CD4-positive, alpha-beta T cell (primary cell): ENCODE measurements at regions of chrX and their contacts with region 1.

Region 1: DNA sequence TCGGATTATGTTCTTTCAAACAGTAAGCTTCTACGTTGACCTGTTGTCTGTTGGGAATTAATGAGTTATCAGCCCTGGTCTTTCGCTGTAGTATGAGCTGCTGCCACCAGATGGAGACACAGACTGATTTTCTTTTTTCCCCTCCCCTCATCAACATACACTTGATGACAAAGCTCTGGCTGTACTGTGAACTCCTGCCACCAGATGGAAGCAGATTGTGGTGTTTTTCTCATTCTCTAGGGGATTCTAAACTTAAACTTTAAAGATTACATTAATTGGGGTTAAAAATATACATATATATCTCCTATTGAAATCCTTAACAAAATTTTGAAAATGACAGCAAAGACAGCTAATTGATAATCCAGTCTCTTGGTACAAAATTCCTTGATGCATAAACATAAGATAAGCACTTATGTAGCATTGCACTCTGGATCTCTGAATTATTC is 44.8 kb downstream of the SMS start:
- DNase-seq: peak; percentile 15 to 83 (median 55)
- ATAC-seq: peak; percentile 99
- H3K4me3 ChIP-seq: no peak overlapping the region
- H3K4me3 Mint-ChIP-seq: no peak overlapping the region
- H3K27ac ChIP-seq: no peak overlapping the region
- H3K27ac Mint-ChIP-seq: no peak overlapping the region
- H3K4me1 ChIP-seq: no peaks in the 10 kb centered on the region
- H3K4me1 Mint-ChIP-seq: peaks cover 5% of the 10 kb centered on the region
- H3K27me3 ChIP-seq: no peaks in the 10 kb centered on the region
- H3K27me3 Mint-ChIP-seq: no peaks in the 10 kb centered on the region
- CTCF ChIP-seq: peak; percentile 73

Region 2: GRCh38 chrX:20530406-20530921 is 1454.9 kb before region 1 on chrX:
- CTCF ChIA-PET with region 1: interaction called, 4 read pairs
- POLR2A ChIA-PET with region 1: no interaction called
- intact Hi-C with region 1: loop called in 1 of 2 experiments (anchors 10 kb)
- DNase-seq: peak; percentile 18 to 70 (median 42)
- ATAC-seq: no peak
- H3K4me3 ChIP-seq: no peak overlapping the region
- H3K4me3 Mint-ChIP-seq: no peak overlapping the region
- H3K27ac ChIP-seq: no peak overlapping the region
- H3K27ac Mint-ChIP-seq: no peak overlapping the region
- H3K4me1 ChIP-seq: no peaks in the 10 kb centered on the region
- H3K4me1 Mint-ChIP-seq: peaks cover 6% of the 10 kb centered on the region
- H3K27me3 ChIP-seq: peaks cover 8 to 10% of the 10 kb centered on the region in 2 experiments
- H3K27me3 Mint-ChIP-seq: peaks cover 53% of the 10 kb centered on the region
- CTCF ChIP-seq: peak; percentile 59

Region 3: DNA sequence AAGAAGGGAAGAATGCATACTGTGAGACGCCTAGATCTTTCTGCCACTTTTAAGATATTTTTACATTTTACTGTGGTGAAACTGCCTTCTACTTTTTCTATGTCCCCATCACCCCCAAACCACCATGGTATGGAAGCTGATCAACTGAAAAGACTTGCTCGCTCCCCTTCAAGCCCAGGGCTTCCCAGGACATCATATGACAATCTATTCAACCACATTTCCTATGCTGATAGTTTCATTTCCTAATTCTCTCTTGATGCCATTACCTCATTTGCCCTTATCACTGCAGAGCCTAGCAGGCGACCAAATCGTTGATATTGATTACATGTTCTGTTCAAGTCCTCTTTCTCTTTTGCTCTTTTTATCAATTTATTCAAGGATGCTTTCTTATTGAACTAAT is 287.1 kb before region 1 on chrX:
- CTCF ChIA-PET with region 1: no interaction called
- POLR2A ChIA-PET with region 1: no interaction called
- intact Hi-C with region 1: no loop called
- DNase-seq: peak in 1 of 14 experiments; percentile 0
- ATAC-seq: no peak
- H3K4me3 ChIP-seq: no peak overlapping the region
- H3K4me3 Mint-ChIP-seq: no peak overlapping the region
- H3K27ac ChIP-seq: no peak overlapping the region
- H3K27ac Mint-ChIP-seq: no peak overlapping the region
- H3K4me1 ChIP-seq: no peaks in the 10 kb centered on the region
- H3K4me1 Mint-ChIP-seq: no peaks in the 10 kb centered on the region
- H3K27me3 ChIP-seq: no peaks in the 10 kb centered on the region
- H3K27me3 Mint-ChIP-seq: no peaks in the 10 kb centered on the region
- CTCF ChIP-seq: no peak

Region 4: DNA sequence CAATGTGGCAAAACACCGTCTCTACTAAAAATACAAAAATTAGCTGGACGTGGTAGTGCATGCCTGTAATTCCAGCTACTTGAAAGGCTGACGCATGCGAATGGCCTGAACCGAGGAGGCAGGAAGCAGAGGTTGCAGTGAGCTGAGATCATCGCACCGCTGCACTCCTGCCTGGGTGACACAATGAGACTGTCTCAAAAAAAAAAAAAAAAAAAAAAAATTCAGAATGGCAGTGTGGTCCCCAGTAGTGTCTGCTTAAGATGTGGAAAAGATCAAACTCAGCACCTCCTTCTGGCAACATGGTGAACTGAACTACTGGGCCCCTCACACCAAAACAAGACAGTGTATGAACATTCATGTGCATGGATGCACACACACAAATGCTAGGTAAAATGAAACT is 12.6 kb before region 1 on chrX:
- CTCF ChIA-PET with region 1: interaction called, 21 read pairs
- POLR2A ChIA-PET with region 1: interaction called, 10 read pairs
- intact Hi-C with region 1: no loop called
- DNase-seq: peak in 13 of 14 experiments; percentile 5 to 82 (median 39)
- ATAC-seq: peak; percentile 94
- H3K4me3 ChIP-seq: no peak overlapping the region
- H3K4me3 Mint-ChIP-seq: peak overlapping the region; percentile 83
- H3K27ac ChIP-seq: peak overlapping the region in 1 of 2 donors; percentile 83
- H3K27ac Mint-ChIP-seq: peak overlapping the region; percentile 94
- H3K4me1 ChIP-seq: peaks cover 17% of the 10 kb centered on the region
- H3K4me1 Mint-ChIP-seq: peaks cover 26% of the 10 kb centered on the region
- H3K27me3 ChIP-seq: no peaks in the 10 kb centered on the region
- H3K27me3 Mint-ChIP-seq: no peaks in the 10 kb centered on the region
- CTCF ChIP-seq: no peak

Region 5: GRCh38 chrX:22135994-22136684 is 150.8 kb after region 1 on chrX:
- CTCF ChIA-PET with region 1: no interaction called
- POLR2A ChIA-PET with region 1: no interaction called
- intact Hi-C with region 1: loop called in 1 of 2 experiments (anchors 5 kb)
- DNase-seq: peak in 6 of 14 experiments; percentile 1 to 58 (median 38)
- ATAC-seq: peak; percentile 44
- H3K4me3 ChIP-seq: no peak overlapping the region
- H3K4me3 Mint-ChIP-seq: peak overlapping the region; percentile 71
- H3K27ac ChIP-seq: no peak overlapping the region
- H3K27ac Mint-ChIP-seq: no peak overlapping the region
- H3K4me1 ChIP-seq: peaks cover 3% of the 10 kb centered on the region
- H3K4me1 Mint-ChIP-seq: peaks cover 10% of the 10 kb centered on the region
- H3K27me3 ChIP-seq: no peaks in the 10 kb centered on the region
- H3K27me3 Mint-ChIP-seq: no peaks in the 10 kb centered on the region
- CTCF ChIP-seq: peak; percentile 62

Region 6: DNA sequence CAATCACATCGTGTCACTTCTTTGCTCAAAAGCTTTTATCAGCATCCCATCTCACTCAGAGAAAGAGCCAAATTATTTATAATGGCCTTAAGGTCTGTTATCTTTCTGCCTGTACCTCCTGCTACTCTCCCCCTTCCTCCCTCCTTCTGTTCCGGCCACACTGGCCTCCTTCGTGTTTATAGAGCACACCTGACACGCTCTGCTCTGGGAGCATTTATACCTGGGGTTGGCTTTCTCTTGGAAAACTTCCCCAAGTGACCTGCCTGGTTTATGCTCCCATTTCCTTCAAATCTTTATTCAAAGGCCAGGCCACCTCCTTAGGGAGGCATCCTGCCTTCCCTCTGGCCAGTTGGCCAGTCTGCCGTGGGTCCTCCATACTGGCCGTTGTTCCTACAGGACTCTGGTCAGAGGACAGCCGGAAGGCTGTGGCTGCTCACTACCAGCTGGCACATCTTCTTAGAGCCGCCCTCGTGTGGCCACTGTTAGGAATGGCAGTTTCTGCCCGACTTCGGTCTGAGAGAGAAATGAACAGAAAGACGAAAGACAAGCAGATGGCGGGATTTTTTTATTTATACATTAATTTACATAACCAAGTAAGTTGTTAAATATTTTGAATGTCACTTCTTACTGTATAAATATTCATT is 207.2 kb after region 1 on chrX:
- CTCF ChIA-PET with region 1: interaction called, 12 read pairs
- POLR2A ChIA-PET with region 1: no interaction called
- intact Hi-C with region 1: loop called (anchors 1 kb)
- DNase-seq: peak; percentile 1 to 63 (median 38)
- ATAC-seq: no peak
- H3K4me3 ChIP-seq: no peak overlapping the region
- H3K4me3 Mint-ChIP-seq: no peak overlapping the region
- H3K27ac ChIP-seq: no peak overlapping the region
- H3K27ac Mint-ChIP-seq: no peak overlapping the region
- H3K4me1 ChIP-seq: peaks cover 3% of the 10 kb centered on the region
- H3K4me1 Mint-ChIP-seq: no peaks in the 10 kb centered on the region
- H3K27me3 ChIP-seq: no peaks in the 10 kb centered on the region
- H3K27me3 Mint-ChIP-seq: no peaks in the 10 kb centered on the region
- CTCF ChIP-seq: peak; percentile 62

Region 7: GRCh38 chrX:22748093-22748999 is 763.0 kb after region 1 on chrX:
- CTCF ChIA-PET with region 1: interaction called, 3 read pairs
- POLR2A ChIA-PET with region 1: no interaction called
- intact Hi-C with region 1: loop called in 1 of 2 experiments (anchors 10 kb)
- DNase-seq: peak in 13 of 14 experiments; percentile 0 to 51 (median 13)
- ATAC-seq: no peak
- H3K4me3 ChIP-seq: no peak overlapping the region
- H3K4me3 Mint-ChIP-seq: no peak overlapping the region
- H3K27ac ChIP-seq: no peak overlapping the region
- H3K27ac Mint-ChIP-seq: no peak overlapping the region
- H3K4me1 ChIP-seq: no peaks in the 10 kb centered on the region
- H3K4me1 Mint-ChIP-seq: no peaks in the 10 kb centered on the region
- H3K27me3 ChIP-seq: no peaks in the 10 kb centered on the region
- H3K27me3 Mint-ChIP-seq: no peaks in the 10 kb centered on the region
- CTCF ChIP-seq: peak; percentile 60

Region 8: GRCh38 chrX:23901805-23902204 is 1916.5 kb after region 1 on chrX:
- CTCF ChIA-PET with region 1: interaction called, 4 read pairs
- POLR2A ChIA-PET with region 1: no interaction called
- intact Hi-C with region 1: loop called in 1 of 2 experiments (anchors 2 kb)
- DNase-seq: peak in 9 of 14 experiments; percentile 4 to 75 (median 30)
- ATAC-seq: peak; percentile 80
- H3K4me3 ChIP-seq: no peak overlapping the region
- H3K4me3 Mint-ChIP-seq: no peak overlapping the region
- H3K27ac ChIP-seq: no peak overlapping the region
- H3K27ac Mint-ChIP-seq: no peak overlapping the region
- H3K4me1 ChIP-seq: no peaks in the 10 kb centered on the region
- H3K4me1 Mint-ChIP-seq: peaks cover 4% of the 10 kb centered on the region
- H3K27me3 ChIP-seq: no peaks in the 10 kb centered on the region
- H3K27me3 Mint-ChIP-seq: no peaks in the 10 kb centered on the region
- CTCF ChIP-seq: no peak